ENCODE measurements at regions of chr11 and their contacts with region 1.

Region 1: DNA sequence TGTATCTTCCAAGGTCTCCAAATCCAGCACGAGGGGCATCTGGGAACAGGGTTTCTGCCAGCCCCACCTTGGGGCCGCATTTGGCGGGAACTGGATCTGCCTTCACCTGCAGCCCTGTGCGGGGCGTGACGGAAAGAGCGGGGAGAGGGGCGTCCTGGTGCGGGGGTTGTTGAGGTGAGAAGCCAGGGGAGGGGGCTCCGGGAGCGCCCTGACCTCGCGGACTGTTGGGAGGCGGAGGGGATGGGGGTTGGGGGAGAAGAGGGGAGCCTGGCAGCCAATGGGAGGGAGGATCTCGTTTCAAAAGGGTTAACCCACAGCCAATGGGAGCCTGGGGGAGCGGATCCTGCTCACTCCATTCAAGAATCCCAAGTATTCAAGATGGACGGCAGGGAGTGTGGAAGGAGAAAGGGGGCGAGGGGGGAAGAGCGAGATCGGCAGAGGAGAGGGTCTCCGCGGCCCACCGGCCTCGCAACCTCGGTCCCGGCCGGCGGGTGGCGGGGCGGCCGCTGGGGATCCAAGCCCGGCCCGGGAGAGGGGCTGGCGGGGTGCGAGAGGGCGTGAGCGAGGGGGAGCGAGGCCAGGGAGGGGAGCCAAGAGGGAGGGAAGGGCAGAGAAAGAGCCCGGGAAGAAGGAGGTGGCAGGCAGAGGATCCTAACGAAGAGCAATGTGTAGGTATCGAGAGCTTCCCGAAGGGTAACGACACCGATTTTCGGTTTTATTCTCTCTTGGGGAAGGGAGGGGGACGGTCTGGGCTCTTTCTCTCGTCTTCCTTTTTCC is 11.5 kb downstream of the YPEL4 start:
- H3K4me3 ChIP-seq: peak overlapping the region; percentile 70
- H3K27ac ChIP-seq: peak overlapping the region; percentile 62; the same call in 1 of the 2 replicates
- H3K4me1 ChIP-seq: no peaks in the 10 kb centered on the region; the same call in 1 of the 2 replicates
- CTCF ChIP-seq: no peak

Region 2: GRCh38 chr11:57567515-57568329 is 70.5 kb before region 1 on chr11 and contains the start of gene UBE2L6:
- CTCF ChIA-PET with region 1: interaction called, 183 read pairs
- POLR2A ChIA-PET with region 1: interaction called, 4 read pairs
- H3K4me3 ChIP-seq: peak within 1 kb of the TSS; percentile 73
- H3K27ac ChIP-seq: no peak within 1 kb of the TSS; the same call in 1 of the 2 replicates
- H3K4me1 ChIP-seq: no peaks in the 10 kb centered on the region
- CTCF ChIP-seq: peak; percentile 64; the same call in 1 of the 2 replicates

Region 3: DNA sequence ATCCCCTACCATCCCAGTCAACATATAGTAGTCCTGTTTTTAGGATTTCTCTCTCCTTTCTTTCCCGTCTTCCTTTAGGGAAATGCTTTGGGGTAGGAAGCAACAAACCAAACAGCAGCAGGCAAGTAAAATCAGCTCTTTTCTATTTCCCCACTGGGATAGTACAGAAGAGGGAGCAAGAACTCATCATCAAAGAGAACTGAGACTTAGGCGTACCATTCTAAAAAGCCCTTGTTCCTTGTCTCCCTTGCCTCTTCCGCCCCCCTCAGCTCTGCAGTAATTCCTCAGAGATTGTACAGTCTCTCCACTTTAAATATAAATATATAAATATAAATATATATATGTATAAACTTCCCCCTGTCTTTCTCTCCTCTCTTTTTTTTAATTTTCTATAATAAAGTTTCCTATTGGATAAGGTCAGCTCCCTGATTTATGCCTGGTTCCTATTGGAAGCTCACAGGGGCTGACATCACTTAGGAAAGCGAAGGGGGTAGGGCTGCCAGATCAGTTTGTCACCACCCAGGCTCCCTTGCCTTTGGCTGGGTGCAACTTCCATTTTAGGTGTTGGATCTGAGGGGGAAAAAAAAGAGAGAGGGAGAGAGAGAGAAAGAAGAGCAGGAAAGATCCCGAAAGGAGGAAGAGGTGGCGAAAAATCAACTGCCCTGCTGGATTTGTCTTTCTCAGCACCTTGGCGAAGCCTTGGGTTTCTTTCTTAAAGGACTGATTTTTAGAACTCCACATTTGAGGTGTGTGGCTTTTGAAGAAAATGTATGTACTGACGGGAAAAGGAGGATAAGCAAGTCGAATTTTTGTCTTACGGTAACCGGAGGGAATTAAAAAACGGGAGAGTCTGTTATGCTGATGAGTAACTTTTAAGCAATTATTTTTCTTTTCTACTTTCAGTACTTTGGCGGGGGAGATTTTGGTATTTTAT is 123.4 kb after region 1 on chr11 and contains the start of gene CTNND1:
- CTCF ChIA-PET with region 1: no interaction called
- POLR2A ChIA-PET with region 1: no interaction called
- H3K4me3 ChIP-seq: peak within 1 kb of the TSS; percentile 50
- H3K27ac ChIP-seq: peak within 1 kb of the TSS; percentile 86
- H3K4me1 ChIP-seq: peaks cover 8% of the 10 kb centered on the region; the same call in 1 of the 2 replicates
- CTCF ChIP-seq: no peak